H1 (cell line): ENCODE measurements at regions of chr21 and their contacts with region 1.

Region 1: DNA sequence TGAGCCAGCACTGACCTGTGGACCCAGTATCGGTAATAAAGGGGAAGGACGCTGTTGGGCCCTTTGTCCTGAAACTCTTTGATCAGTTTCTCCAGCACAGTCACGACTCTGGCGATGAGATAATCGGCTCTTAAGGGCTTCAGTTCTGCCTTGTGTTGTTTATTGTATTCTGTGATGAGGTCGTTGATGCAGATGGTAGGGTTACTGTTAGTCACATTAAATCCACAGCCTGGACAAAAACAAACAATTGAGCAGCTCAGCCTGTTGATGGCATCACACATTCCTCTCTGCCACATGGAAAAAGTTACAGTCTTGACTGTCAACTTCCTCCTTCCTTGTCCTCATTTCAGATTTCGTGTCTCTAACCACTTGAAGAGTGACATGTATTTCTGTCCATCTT is 57.6 kb downstream of the SIM2 start:
- DNase-seq: no peak
- H3K4me3 ChIP-seq: no peak overlapping the region
- H3K27ac ChIP-seq: no peak overlapping the region
- H3K4me1 ChIP-seq: peaks cover 7 to 18% (median 9%) of the 10 kb centered on the region in 4 experiments
- H3K27me3 ChIP-seq: no peaks in the 10 kb centered on the region
- CTCF ChIP-seq: no peak
- EP300 ChIP-seq: no peak
- POLR2A ChIP-seq: no peak
- RAD21 ChIP-seq: no peak

Region 2: GRCh38 chr21:36535618-36536241 is 220.8 kb before region 1 on chr21:
- CTCF ChIA-PET with region 1: no interaction called
- POLR2A ChIA-PET with region 1: no interaction called
- DNase-seq: no peak
- H3K4me3 ChIP-seq: no peak overlapping the region
- H3K27ac ChIP-seq: no peak overlapping the region
- H3K4me1 ChIP-seq: peaks cover 0 to 7% (median 0%) of the 10 kb centered on the region in 4 experiments; a peak in 2 of 7 replicates
- H3K27me3 ChIP-seq: peaks cover 0 to under 1% (median 0%) of the 10 kb centered on the region in 4 experiments; a peak in 3 of 7 replicates
- CTCF ChIP-seq: no peak
- EP300 ChIP-seq: no peak
- POLR2A ChIP-seq: no peak
- RAD21 ChIP-seq: no peak

Region 3: GRCh38 chr21:36567216-36567885 is 189.2 kb before region 1 on chr21:
- CTCF ChIA-PET with region 1: no interaction called
- POLR2A ChIA-PET with region 1: no interaction called
- DNase-seq: no peak
- H3K4me3 ChIP-seq: no peak overlapping the region
- H3K27ac ChIP-seq: no peak overlapping the region
- H3K4me1 ChIP-seq: no peaks in the 10 kb centered on the region
- H3K27me3 ChIP-seq: no peaks in the 10 kb centered on the region; a peak in 1 of 7 replicates
- CTCF ChIP-seq: no peak
- EP300 ChIP-seq: no peak
- POLR2A ChIP-seq: no peak
- RAD21 ChIP-seq: no peak

Region 4: DNA sequence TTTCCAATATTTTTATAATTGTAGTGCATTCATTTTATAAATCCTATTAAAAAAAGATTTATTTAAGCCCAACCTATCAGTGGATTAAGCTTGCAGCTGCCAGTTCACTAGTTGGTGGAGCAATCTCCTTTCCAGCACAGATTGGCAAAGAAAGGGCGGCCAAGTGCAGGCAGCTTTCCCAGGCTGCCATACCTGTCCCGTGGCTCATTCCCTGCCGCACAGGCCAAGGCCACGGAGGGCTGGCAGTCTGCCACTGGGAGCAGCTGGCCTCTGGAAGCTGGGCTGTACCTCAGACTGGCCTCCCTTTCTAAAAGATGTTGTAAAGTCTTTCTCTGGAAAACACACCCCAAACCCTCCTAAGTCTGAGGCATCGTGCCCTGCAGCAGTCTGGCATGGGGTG is 16.6 kb after region 1 on chr21:
- CTCF ChIA-PET with region 1: interaction called, 11 read pairs
- POLR2A ChIA-PET with region 1: interaction called, 3 read pairs
- DNase-seq: no peak
- H3K4me3 ChIP-seq: no peak overlapping the region
- H3K27ac ChIP-seq: no peak overlapping the region
- H3K4me1 ChIP-seq: no peaks in the 10 kb centered on the region
- H3K27me3 ChIP-seq: no peaks in the 10 kb centered on the region
- CTCF ChIP-seq: no peak
- EP300 ChIP-seq: no peak
- POLR2A ChIP-seq: no peak
- RAD21 ChIP-seq: no peak

Region 5: DNA sequence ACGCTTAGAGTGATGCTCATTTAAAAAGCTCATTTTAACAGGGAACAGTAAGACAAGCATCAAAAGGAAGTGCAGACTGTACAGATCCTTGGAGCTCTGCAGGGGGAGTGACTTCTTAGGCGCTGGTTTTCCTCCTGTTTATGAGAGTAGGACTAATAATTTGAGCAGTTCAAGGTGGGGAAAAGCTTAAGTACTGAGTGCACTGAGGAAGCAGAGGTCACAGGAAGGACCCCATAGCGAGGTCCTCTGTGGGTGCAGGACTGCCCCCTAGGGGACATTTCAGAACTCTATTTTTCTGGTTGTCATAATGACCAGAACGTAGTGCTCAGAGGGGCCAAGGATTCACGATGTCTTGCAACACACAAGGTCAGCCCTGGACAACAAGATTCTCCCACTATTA is 97.9 kb after region 1 on chr21:
- CTCF ChIA-PET with region 1: interaction called, 16 read pairs
- POLR2A ChIA-PET with region 1: no interaction called
- DNase-seq: peak; percentile 29 to 81
- H3K4me3 ChIP-seq: no peak overlapping the region
- H3K27ac ChIP-seq: no peak overlapping the region
- H3K4me1 ChIP-seq: peaks cover 0 to 2% (median 1%) of the 10 kb centered on the region in 4 experiments; a peak in 2 of 7 replicates
- H3K27me3 ChIP-seq: no peaks in the 10 kb centered on the region
- CTCF ChIP-seq: peak; percentile 67 to 87 (median 86)
- EP300 ChIP-seq: no peak
- POLR2A ChIP-seq: no peak
- RAD21 ChIP-seq: peak; percentile 82 to 92